Natural killer cell (primary cell): ENCODE measurements at regions of chr3 and their contacts with region 1.

Region 1: DNA sequence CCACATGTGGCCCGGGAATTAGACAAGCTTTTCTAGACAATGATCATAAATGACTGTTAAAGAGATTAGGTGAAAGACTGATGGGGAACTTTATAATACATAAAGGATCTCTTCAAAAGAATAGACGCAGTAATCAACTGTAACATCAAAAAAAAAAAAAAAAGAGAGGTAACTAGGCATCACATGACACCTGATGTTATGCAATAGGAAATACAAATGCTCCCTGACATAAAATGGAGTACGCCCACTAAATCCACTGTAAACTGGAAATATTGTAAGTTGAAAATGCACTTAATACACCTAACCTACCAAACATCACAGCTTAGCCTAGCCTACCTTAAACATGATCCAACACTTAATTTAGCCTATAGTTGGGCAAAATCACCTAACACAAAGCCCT is 27.2 kb downstream of the GSK3B start:
- DNase-seq: no peak
- ATAC-seq: no peak
- H3K4me3 ChIP-seq: no peak overlapping the region
- H3K4me3 Mint-ChIP-seq: no peak overlapping the region
- H3K27ac ChIP-seq: no peak overlapping the region
- H3K27ac Mint-ChIP-seq: peak overlapping the region; percentile 10 to 68
- H3K4me1 ChIP-seq: no peaks in the 10 kb centered on the region
- H3K4me1 Mint-ChIP-seq: peaks cover 61 to 64% of the 10 kb centered on the region in 2 donors
- H3K27me3 ChIP-seq: no peaks in the 10 kb centered on the region
- H3K27me3 Mint-ChIP-seq: no peaks in the 10 kb centered on the region
- CTCF ChIP-seq: no peak

Region 2: DNA sequence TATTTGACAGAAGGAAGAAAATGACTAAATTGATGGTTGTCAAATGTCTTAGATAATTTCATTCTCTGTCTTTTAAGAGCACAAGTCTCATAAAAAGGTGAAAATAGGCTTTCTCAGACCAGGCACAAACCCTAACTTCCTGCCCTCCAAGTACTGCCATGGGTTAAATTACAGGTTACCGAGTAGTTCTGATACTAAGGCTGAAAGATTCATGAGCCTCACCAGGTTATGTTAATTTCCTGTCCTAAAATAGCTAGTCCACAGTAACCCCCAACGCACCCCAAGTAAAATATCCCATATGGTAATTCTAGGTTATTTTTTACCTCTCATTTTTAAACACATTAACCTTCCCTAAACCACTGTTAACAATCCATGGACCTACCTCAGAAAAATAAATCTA is 14.9 kb before region 1 on chr3:
- intact Hi-C with region 1: loop called (anchors 2 kb)
- DNase-seq: peak in 1 of 2 donors; percentile 18
- ATAC-seq: peak in 2 of 3 donors; percentile 27 to 52
- H3K4me3 ChIP-seq: no peak overlapping the region
- H3K4me3 Mint-ChIP-seq: peak overlapping the region; percentile 47
- H3K27ac ChIP-seq: peak overlapping the region; percentile 19
- H3K27ac Mint-ChIP-seq: peak overlapping the region; percentile 58 to 67
- H3K4me1 ChIP-seq: peaks cover 21% of the 10 kb centered on the region
- H3K4me1 Mint-ChIP-seq: peaks cover 76 to 79% of the 10 kb centered on the region in 2 donors
- H3K27me3 ChIP-seq: no peaks in the 10 kb centered on the region
- H3K27me3 Mint-ChIP-seq: no peaks in the 10 kb centered on the region
- CTCF ChIP-seq: no peak

Region 3: GRCh38 chr3:120177151-120177550 is 110.1 kb after region 1 on chr3:
- intact Hi-C with region 1: no loop called
- DNase-seq: no peak
- ATAC-seq: no peak
- H3K4me3 ChIP-seq: no peak overlapping the region
- H3K4me3 Mint-ChIP-seq: no peak overlapping the region
- H3K27ac ChIP-seq: no peak overlapping the region
- H3K27ac Mint-ChIP-seq: no peak overlapping the region
- H3K4me1 ChIP-seq: no peaks in the 10 kb centered on the region
- H3K4me1 Mint-ChIP-seq: no peaks in the 10 kb centered on the region
- H3K27me3 ChIP-seq: no peaks in the 10 kb centered on the region
- H3K27me3 Mint-ChIP-seq: peaks cover 0 to 5% of the 10 kb centered on the region in 2 donors
- CTCF ChIP-seq: no peak

Region 4: DNA sequence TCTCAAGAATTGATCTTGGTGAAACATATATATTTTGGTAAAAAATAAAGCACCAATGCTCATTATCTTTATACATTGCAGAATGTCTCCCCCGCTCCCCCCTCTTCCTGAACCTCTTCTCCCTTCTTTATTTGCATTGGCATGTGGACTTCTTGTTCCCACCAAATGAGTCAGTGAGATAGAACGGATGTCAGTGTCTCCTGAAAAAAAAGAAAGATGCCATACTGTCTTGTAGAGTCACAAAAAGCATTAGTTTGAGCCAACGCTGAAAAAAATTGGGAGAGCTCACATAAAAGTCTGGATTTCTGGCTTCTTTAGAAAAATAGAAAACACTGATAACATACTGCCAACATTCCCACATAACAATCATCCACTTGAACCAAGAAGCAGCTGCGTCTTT is 808.9 kb after region 1 on chr3:
- intact Hi-C with region 1: no loop called
- DNase-seq: no peak
- ATAC-seq: no peak
- H3K4me3 ChIP-seq: no peak overlapping the region
- H3K4me3 Mint-ChIP-seq: no peak overlapping the region
- H3K27ac ChIP-seq: no peak overlapping the region
- H3K27ac Mint-ChIP-seq: no peak overlapping the region
- H3K4me1 ChIP-seq: no peaks in the 10 kb centered on the region
- H3K4me1 Mint-ChIP-seq: no peaks in the 10 kb centered on the region
- H3K27me3 ChIP-seq: no peaks in the 10 kb centered on the region
- H3K27me3 Mint-ChIP-seq: no peaks in the 10 kb centered on the region
- CTCF ChIP-seq: no peak